Naive thymus-derived CD4-positive, alpha-beta T cell (primary cell): ENCODE measurements at regions of chr2 and their contacts with region 1.

Region 1: GRCh38 chr2:162890690-162891311 is 52.2 kb upstream of the KCNH7 start:
- DNase-seq: no peak
- ATAC-seq: no peak
- H3K4me3 ChIP-seq: no peak overlapping the region
- H3K4me3 Mint-ChIP-seq: no peak overlapping the region
- H3K27ac ChIP-seq: no peak overlapping the region
- H3K27ac Mint-ChIP-seq: no peak overlapping the region
- H3K4me1 ChIP-seq: no peaks in the 10 kb centered on the region
- H3K4me1 Mint-ChIP-seq: peaks cover 0 to 2% (median 0%) of the 10 kb centered on the region in 7 donors
- H3K27me3 ChIP-seq: no peaks in the 10 kb centered on the region
- H3K27me3 Mint-ChIP-seq: no peaks in the 10 kb centered on the region

Region 2: GRCh38 chr2:162874412-162874811 is 16.4 kb before region 1 on chr2:
- CTCF ChIA-PET with region 1: no interaction called
- POLR2A ChIA-PET with region 1: no interaction called
- intact Hi-C with region 1: no loop called
- DNase-seq: no peak
- ATAC-seq: no peak
- H3K4me3 ChIP-seq: no peak overlapping the region
- H3K4me3 Mint-ChIP-seq: no peak overlapping the region
- H3K27ac ChIP-seq: no peak overlapping the region
- H3K27ac Mint-ChIP-seq: no peak overlapping the region
- H3K4me1 ChIP-seq: no peaks in the 10 kb centered on the region
- H3K4me1 Mint-ChIP-seq: no peaks in the 10 kb centered on the region
- H3K27me3 ChIP-seq: no peaks in the 10 kb centered on the region
- H3K27me3 Mint-ChIP-seq: no peaks in the 10 kb centered on the region

Region 3: DNA sequence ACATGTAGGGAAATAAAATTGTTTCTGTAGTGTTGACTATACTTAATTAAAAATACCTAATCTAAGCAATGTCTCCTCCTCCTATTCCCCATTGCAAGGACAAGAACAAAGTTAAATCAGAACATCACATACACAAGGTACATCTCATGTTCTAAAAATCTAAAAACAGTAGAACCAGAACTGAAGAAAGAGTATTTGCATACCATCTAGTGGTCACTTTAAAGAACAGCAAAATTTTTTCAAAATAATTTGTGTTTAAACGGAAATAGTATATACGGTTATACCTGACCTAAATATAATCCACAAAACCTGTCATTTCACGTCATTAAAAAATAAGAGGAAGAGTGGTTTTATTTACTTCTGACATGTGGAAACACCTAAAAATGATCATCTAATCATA is 242.0 kb after region 1 on chr2:
- CTCF ChIA-PET with region 1: no interaction called
- POLR2A ChIA-PET with region 1: no interaction called
- intact Hi-C with region 1: loop called in 1 of 2 experiments (anchors 2 kb)
- DNase-seq: no peak
- ATAC-seq: no peak
- H3K4me3 ChIP-seq: no peak overlapping the region
- H3K4me3 Mint-ChIP-seq: no peak overlapping the region
- H3K27ac ChIP-seq: no peak overlapping the region
- H3K27ac Mint-ChIP-seq: no peak overlapping the region
- H3K4me1 ChIP-seq: no peaks in the 10 kb centered on the region
- H3K4me1 Mint-ChIP-seq: no peaks in the 10 kb centered on the region
- H3K27me3 ChIP-seq: no peaks in the 10 kb centered on the region
- H3K27me3 Mint-ChIP-seq: no peaks in the 10 kb centered on the region